Aorta (tissue), 5 donors: ENCODE measurements at regions of chr12 and their contacts with region 1.

Region 1: GRCh38 chr12:6167327-6168259 is 32.6 kb upstream of the CD9 start:
- DNase-seq: peak; percentile 90 to 91
- ATAC-seq: peak; percentile 86
- H3K4me3 ChIP-seq: no peak overlapping the region
- H3K27ac ChIP-seq: peak overlapping the region; percentile 96 to 100
- H3K4me1 ChIP-seq: peaks cover 0 to 4% of the 10 kb centered on the region in 2 donors
- H3K27me3 ChIP-seq: no peaks in the 10 kb centered on the region

Region 2: GRCh38 chr12:6062757-6063735 is 104.5 kb before region 1 on chr12:
- intact Hi-C with region 1: loop called in 1 of 2 experiments (anchors 10 kb)
- DNase-seq: peak in 1 of 2 donors; percentile 66
- ATAC-seq: peak; percentile 68
- H3K4me3 ChIP-seq: no peak overlapping the region
- H3K27ac ChIP-seq: no peak overlapping the region
- H3K4me1 ChIP-seq: no peaks in the 10 kb centered on the region
- H3K27me3 ChIP-seq: no peaks in the 10 kb centered on the region

Region 3: DNA sequence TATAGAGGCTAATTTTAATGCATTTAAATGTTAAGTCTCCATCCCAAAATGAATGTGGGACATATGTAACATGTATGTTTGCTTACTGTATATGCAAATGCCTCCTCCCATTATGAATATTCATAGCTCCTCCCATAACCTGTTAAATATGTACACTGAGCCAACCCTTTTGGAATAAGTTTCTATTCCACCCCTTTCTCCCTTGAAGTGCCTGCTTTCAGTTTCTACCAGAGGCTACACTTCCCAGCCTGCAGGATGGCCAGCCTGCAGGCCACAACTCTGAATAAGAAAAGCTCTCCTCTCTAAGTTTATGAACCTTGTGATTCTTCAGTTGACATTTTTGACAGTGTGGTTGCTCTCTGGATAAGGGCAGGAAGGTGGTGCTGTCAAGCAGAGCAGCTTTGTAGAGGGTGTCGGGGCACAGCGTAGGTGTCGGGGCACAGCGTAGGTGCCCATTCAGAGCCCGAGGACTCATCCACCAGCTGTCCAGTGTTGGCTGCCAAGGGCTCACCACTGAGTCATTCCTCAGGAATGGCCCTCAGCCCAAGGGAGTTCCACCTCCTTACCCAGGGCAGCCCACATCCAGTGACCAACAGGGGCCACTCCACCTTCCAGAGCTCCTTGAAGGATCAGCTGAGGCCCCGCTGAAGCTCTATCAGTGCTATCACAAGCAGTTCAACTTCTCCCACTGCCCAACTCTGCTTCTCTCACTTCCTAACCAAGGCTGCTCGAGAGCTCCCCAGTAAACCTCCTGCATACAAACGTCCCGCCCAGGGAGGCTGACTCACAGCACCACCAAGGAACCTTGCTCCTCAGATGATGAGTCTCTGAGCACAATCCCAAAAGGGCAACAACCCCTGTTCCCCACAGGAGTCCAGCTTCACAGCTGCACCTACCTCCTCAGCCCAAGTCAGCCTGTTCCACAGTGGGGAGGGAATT is 74.5 kb before region 1 on chr12:
- intact Hi-C with region 1: loop called in 1 of 2 experiments (anchors 5 kb)
- DNase-seq: peak; percentile 82 to 89
- ATAC-seq: peak; percentile 83
- H3K4me3 ChIP-seq: no peak overlapping the region
- H3K27ac ChIP-seq: peak overlapping the region; percentile 7 to 70
- H3K4me1 ChIP-seq: peaks cover 0 to 4% of the 10 kb centered on the region in 2 donors
- H3K27me3 ChIP-seq: no peaks in the 10 kb centered on the region